Prostate gland (tissue), 2 donors: ENCODE measurements at regions of chr22 and their contacts with region 1.

Region 1: DNA sequence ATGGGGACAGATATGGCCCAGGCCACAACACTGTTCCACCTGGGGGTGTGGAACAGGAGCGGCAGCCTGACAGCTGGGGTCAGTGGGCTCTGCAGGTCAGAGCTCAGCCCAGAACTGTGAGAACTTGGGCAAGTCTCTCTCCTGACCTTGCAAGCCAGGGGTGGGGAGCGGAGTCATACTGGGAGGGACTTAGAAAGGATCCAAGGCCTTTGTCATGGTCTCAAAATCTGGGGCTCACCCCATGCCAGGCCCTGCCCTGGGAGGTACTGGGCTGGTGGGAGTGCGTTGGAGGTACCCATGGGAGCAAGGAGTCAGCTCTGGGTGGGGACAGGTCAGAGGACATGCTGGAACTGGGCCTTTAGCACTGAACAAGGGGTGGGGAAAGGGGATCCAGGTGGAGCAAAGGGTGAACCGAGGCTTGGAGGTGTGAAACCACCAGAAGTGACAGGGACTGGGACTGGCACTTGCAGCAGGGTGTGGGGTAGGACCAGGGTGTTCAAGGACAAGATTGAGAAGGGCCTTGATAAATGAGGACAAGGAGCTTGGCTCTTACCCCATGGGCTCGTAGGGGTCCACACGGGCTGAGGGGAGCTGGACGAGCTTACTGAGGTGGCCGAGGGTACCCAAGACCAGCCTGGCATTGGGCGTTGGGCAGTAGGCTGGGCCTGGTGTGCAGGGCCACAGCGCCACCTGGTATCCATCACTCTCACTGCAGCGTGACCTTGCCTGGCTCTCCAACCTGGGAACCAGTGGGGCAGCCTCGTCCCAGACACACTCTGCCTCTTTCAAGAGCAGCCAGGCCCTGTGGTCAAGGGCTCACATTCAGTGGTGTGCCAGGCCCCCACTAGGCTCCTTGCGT is 7.4 kb upstream of the PMM1 start:
- DNase-seq: peak; percentile 38
- H3K4me3 ChIP-seq: no peak overlapping the region
- H3K27ac ChIP-seq: no peak overlapping the region
- H3K4me1 ChIP-seq: no peaks in the 10 kb centered on the region
- H3K27me3 ChIP-seq: no peaks in the 10 kb centered on the region
- CTCF ChIP-seq: peak in 3 of 4 experiments; percentile 41 to 83 (median 71)
- POLR2A ChIP-seq: no peak

Region 2: DNA sequence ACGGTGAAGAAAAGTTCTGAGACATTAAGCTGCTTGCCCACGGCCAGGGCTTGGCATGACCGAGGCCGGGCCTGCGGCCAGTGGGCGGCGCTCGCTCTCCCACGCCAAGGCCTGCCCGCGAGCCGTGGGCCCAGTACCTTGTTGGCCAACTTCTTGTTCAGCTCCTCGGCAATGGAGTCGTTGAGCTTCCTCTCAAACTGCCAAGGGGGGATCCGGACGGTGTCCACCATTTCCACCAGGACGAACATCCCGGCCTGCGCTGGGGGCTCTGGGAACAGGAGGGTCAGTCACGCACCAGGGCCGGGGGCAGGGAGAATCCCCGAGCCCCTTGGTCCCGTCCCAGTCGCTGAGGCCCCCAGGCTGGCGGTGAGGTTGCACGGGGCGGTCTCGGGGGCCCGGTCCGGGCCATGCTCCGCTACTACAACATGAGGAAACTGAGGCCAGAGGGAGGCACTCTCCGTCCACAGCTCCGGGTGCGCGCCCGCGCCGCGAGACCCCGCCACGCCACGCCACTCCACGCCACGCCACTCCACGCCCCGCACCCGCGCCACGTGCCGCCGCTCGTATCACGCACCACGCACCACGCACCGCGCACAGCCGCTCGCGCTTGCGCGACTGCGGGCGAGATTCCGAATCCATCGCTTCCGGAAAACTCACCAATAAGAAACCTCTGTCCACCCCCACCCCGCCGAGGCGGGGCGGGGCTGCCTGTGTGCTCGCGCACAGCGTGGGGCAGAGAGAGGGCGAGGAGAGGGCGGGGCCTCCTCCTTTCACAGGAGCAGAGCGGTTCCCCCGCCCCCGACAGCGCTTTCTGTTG is 52.9 kb before region 1 on chr22 and contains the start of gene POLR3H:
- intact Hi-C with region 1: loop called (anchors 5 kb)
- DNase-seq: peak; percentile 97
- H3K4me3 ChIP-seq: peak within 1 kb of the TSS; percentile 75 to 82
- H3K27ac ChIP-seq: peak within 1 kb of the TSS; percentile 79 to 80
- H3K4me1 ChIP-seq: peaks cover 7% of the 10 kb centered on the region
- H3K27me3 ChIP-seq: no peaks in the 10 kb centered on the region
- CTCF ChIP-seq: peak; percentile 31 to 77 (median 64)
- POLR2A ChIP-seq: peak; percentile 38
- total RNA-seq, gene POLR3H: 27.8 to 29.1 TPM